WTC11 (cell line): ENCODE measurements at regions of chr6 and their contacts with region 1.

Region 1: GRCh38 chr6:37741757-37742400 is 44.2 kb upstream of the MDGA1 start:
- DNase-seq: peak; percentile 64
- ATAC-seq: peak; percentile 89
- H3K4me3 Mint-ChIP-seq: 0 out of 2 replicates have a peak overlapping the region, but pooled peaks have one; percentile 14
- H3K27ac Mint-ChIP-seq: no peak overlapping the region
- H3K4me1 Mint-ChIP-seq: peaks cover 8% of the 10 kb centered on the region
- H3K27me3 Mint-ChIP-seq: peaks cover 76% of the 10 kb centered on the region
- CTCF ChIP-seq: peak; percentile 26; the same call in 1 of the 2 replicates

Region 2: GRCh38 chr6:37473397-37474095 is 268.3 kb before region 1 on chr6:
- CTCF ChIA-PET with region 1: no interaction called
- POLR2A ChIA-PET with region 1: no interaction called
- DNase-seq: no peak
- ATAC-seq: no peak
- H3K4me3 Mint-ChIP-seq: no peak overlapping the region
- H3K27ac Mint-ChIP-seq: no peak overlapping the region
- H3K4me1 Mint-ChIP-seq: no peaks in the 10 kb centered on the region
- H3K27me3 Mint-ChIP-seq: no peaks in the 10 kb centered on the region
- CTCF ChIP-seq: no peak

Region 3: DNA sequence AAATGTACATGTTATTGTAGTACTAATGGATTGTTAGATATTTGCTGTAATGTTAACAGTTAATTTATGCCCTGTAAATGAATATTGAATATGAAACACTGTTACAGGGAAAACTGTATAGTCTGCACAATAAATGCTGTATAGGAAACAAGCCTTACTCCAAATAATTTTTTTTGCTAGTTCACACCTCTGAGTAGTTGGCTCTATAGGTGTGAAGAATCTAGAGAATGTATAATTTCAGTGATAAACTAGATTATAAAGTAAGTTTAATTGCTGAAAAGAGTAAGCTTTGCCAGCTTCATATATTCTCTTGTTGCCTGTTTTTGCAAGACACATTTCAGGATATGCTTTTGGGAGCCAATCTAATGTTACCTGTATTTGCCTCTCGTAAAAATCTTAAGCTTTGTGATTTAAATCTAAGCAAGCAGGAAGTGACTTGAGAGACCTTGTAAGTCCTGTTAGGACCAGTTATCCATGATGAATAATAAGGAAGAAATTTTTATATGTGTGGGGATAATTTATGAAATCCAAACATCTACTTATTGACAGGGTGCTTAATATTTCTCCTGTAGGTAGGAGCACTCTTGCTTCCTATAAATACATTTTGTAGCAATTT is 310.0 kb after region 1 on chr6:
- CTCF ChIA-PET with region 1: no interaction called
- POLR2A ChIA-PET with region 1: no interaction called
- DNase-seq: no peak
- ATAC-seq: no peak
- H3K4me3 Mint-ChIP-seq: no peak overlapping the region
- H3K27ac Mint-ChIP-seq: no peak overlapping the region
- H3K4me1 Mint-ChIP-seq: peaks cover 46% of the 10 kb centered on the region
- H3K27me3 Mint-ChIP-seq: no peaks in the 10 kb centered on the region
- CTCF ChIP-seq: no peak

Region 4: GRCh38 chr6:38262026-38262425 is 520.1 kb after region 1 on chr6:
- CTCF ChIA-PET with region 1: no interaction called
- POLR2A ChIA-PET with region 1: interaction called, 11 read pairs
- DNase-seq: no peak
- ATAC-seq: peak; percentile 77
- H3K4me3 Mint-ChIP-seq: no peak overlapping the region
- H3K27ac Mint-ChIP-seq: peak overlapping the region; percentile 90
- H3K4me1 Mint-ChIP-seq: peaks cover 34% of the 10 kb centered on the region
- H3K27me3 Mint-ChIP-seq: no peaks in the 10 kb centered on the region
- CTCF ChIP-seq: no peak